ENCODE measurements at regions of chr2 and their contacts with region 1.

Region 1: GRCh38 chr2:20225294-20226151 is 593 bp upstream of the SDC1 start:
- DNase-seq: peak; percentile 51 to 87
- H3K4me3 ChIP-seq: peak overlapping the region; percentile 49 to 94 (median 64)
- H3K27ac ChIP-seq: peak overlapping the region; percentile 46; the same call in 1 of the 2 replicates
- H3K4me1 ChIP-seq: peaks cover 4 to 22% (median 15%) of the 10 kb centered on the region in 4 experiments
- H3K27me3 ChIP-seq: peaks cover 0 to 7% (median 4%) of the 10 kb centered on the region in 4 experiments; a peak in 4 of 7 replicates
- CTCF ChIP-seq: peak in 2 of 3 experiments; percentile 47 to 55; a peak in 3 of 4 replicates
- EP300 ChIP-seq: no peak
- POLR2A ChIP-seq: no peak; a peak in 2 of 3 replicates
- RAD21 ChIP-seq: peak; percentile 48 to 55

Region 2: DNA sequence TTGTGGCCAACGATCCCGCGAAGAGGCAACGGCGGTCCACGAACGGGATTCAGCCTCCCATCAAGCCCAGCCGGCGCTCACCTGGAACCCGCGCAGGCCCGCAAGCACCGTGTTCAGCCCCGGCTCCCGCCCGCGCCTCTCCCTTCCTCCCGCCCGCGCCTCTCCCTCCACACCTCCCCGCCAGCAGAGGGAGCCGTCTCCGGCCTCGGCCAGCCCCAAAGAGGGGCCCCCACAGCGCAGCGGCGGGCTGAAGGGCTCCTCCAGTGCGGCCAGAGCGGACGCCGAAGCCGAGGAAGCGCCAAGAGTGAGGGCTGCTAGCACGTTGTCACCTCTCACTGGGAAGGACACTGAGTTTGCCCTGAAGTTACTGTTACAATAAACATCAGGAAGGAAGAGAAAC is 118.8 kb before region 1 on chr2:
- CTCF ChIA-PET with region 1: interaction called, 39 read pairs
- POLR2A ChIA-PET with region 1: interaction called, 4 read pairs
- DNase-seq: peak; percentile 21 to 94
- H3K4me3 ChIP-seq: peak overlapping the region in 3 of 4 experiments; percentile 27 to 48 (median 29); a peak in 5 of 8 replicates
- H3K27ac ChIP-seq: no peak overlapping the region
- H3K4me1 ChIP-seq: peaks cover 0 to 2% (median 0%) of the 10 kb centered on the region in 4 experiments; a peak in 1 of 7 replicates
- H3K27me3 ChIP-seq: peaks cover 0 to 5% (median 3%) of the 10 kb centered on the region in 4 experiments; a peak in 3 of 7 replicates
- CTCF ChIP-seq: peak; percentile 72 to 83 (median 73)
- EP300 ChIP-seq: no peak
- POLR2A ChIP-seq: no peak
- RAD21 ChIP-seq: peak; percentile 65 to 77

Region 3: GRCh38 chr2:20186078-20186854 is 39.3 kb before region 1 on chr2:
- CTCF ChIA-PET with region 1: interaction called, 36 read pairs
- POLR2A ChIA-PET with region 1: interaction called, 5 read pairs
- DNase-seq: no peak
- H3K4me3 ChIP-seq: no peak overlapping the region
- H3K27ac ChIP-seq: no peak overlapping the region
- H3K4me1 ChIP-seq: peaks cover 0 to 39% (median 21%) of the 10 kb centered on the region in 4 experiments; a peak in 6 of 7 replicates
- H3K27me3 ChIP-seq: no peaks in the 10 kb centered on the region; a peak in 3 of 7 replicates
- CTCF ChIP-seq: no peak
- EP300 ChIP-seq: no peak
- POLR2A ChIP-seq: no peak
- RAD21 ChIP-seq: no peak

Region 4: DNA sequence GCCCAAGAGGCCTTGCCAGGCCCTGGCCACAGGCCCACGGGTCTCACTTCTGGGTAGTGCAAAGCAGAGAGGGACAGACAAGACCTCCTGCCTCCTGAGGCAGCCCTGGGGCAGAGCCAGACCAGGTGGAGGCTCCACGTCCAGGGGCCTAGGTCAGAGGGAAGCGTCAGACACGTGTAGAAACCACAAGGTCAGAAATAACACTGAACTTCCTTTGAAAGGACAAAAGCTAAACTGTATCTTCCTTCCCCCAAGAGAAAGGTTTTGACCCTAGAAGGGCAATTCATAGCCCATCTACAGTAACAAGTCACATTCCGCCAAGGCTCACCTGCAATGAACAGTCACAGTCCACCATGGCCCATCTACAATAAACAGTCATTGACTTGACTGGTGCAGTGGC is 18.5 kb before region 1 on chr2:
- CTCF ChIA-PET with region 1: interaction called, 22 read pairs
- POLR2A ChIA-PET with region 1: interaction called, 13 read pairs
- DNase-seq: no peak
- H3K4me3 ChIP-seq: no peak overlapping the region
- H3K27ac ChIP-seq: no peak overlapping the region
- H3K4me1 ChIP-seq: peaks cover 0 to 10% (median 0%) of the 10 kb centered on the region in 4 experiments; a peak in 2 of 7 replicates
- H3K27me3 ChIP-seq: no peaks in the 10 kb centered on the region
- CTCF ChIP-seq: no peak
- EP300 ChIP-seq: no peak
- POLR2A ChIP-seq: no peak
- RAD21 ChIP-seq: no peak

Region 5: GRCh38 chr2:20212459-20212870 is 13.1 kb before region 1 on chr2:
- CTCF ChIA-PET with region 1: interaction called, 22 read pairs
- POLR2A ChIA-PET with region 1: interaction called, 19 read pairs
- DNase-seq: no peak
- H3K4me3 ChIP-seq: no peak overlapping the region
- H3K27ac ChIP-seq: no peak overlapping the region
- H3K4me1 ChIP-seq: peaks cover 0 to 26% (median 9%) of the 10 kb centered on the region in 4 experiments; a peak in 6 of 7 replicates
- H3K27me3 ChIP-seq: no peaks in the 10 kb centered on the region
- CTCF ChIP-seq: no peak
- EP300 ChIP-seq: no peak
- POLR2A ChIP-seq: no peak
- RAD21 ChIP-seq: no peak

Region 6: GRCh38 chr2:20242060-20243006 is 16.8 kb after region 1 on chr2:
- CTCF ChIA-PET with region 1: interaction called, 63 read pairs
- POLR2A ChIA-PET with region 1: interaction called, 7 read pairs
- DNase-seq: peak in 1 of 2 experiments; percentile 93
- H3K4me3 ChIP-seq: no peak overlapping the region
- H3K27ac ChIP-seq: 0 out of 2 replicates have a peak overlapping the region, but pooled peaks have one; percentile 3
- H3K4me1 ChIP-seq: peaks cover 0 to 8% (median 2%) of the 10 kb centered on the region in 4 experiments; a peak in 5 of 7 replicates
- H3K27me3 ChIP-seq: no peaks in the 10 kb centered on the region; a peak in 1 of 7 replicates
- CTCF ChIP-seq: peak; percentile 63 to 91 (median 86)
- EP300 ChIP-seq: no peak
- POLR2A ChIP-seq: no peak
- RAD21 ChIP-seq: peak; percentile 29 to 52

Region 7: GRCh38 chr2:20314562-20315501 is 89.3 kb after region 1 on chr2:
- CTCF ChIA-PET with region 1: no interaction called
- POLR2A ChIA-PET with region 1: no interaction called
- DNase-seq: no peak
- H3K4me3 ChIP-seq: no peak overlapping the region
- H3K27ac ChIP-seq: no peak overlapping the region
- H3K4me1 ChIP-seq: peaks cover 0 to 3% (median 3%) of the 10 kb centered on the region in 4 experiments; a peak in 3 of 7 replicates
- H3K27me3 ChIP-seq: no peaks in the 10 kb centered on the region
- CTCF ChIP-seq: no peak
- EP300 ChIP-seq: no peak
- POLR2A ChIP-seq: no peak
- RAD21 ChIP-seq: no peak

Region 8: GRCh38 chr2:20466417-20466911 is 240.9 kb after region 1 on chr2:
- CTCF ChIA-PET with region 1: no interaction called
- POLR2A ChIA-PET with region 1: no interaction called
- DNase-seq: no peak
- H3K4me3 ChIP-seq: no peak overlapping the region
- H3K27ac ChIP-seq: no peak overlapping the region
- H3K4me1 ChIP-seq: no peaks in the 10 kb centered on the region
- H3K27me3 ChIP-seq: peaks cover 0 to 2% (median 0%) of the 10 kb centered on the region in 4 experiments; a peak in 1 of 7 replicates
- CTCF ChIP-seq: no peak
- EP300 ChIP-seq: no peak
- POLR2A ChIP-seq: no peak
- RAD21 ChIP-seq: no peak

Measured in H1 (cell line).